ENCODE measurements at regions of chr16 and their contacts with region 1.

Region 1: DNA sequence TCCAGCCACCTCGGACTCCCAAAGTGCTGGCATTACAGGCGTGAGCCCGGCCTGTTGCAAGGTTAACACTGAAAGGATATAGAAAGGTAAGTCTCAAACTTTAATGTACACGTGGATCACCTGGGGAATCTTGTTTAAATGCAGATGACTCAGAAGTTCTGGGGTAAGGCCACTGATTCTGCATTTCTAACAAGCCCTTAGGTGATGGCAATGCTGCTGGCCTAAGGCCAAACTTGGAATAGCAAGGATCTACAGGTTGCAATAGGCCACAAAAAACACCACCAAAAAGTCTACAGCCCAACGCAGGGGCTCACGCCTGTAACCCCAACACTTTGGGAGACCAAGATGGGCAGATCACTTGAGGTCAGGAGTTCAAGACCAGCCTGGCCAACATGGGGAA is 4.2 kb downstream of the CMTM4 start:
- DNase-seq: no peak
- ATAC-seq: no peak
- H3K4me3 ChIP-seq: no peak overlapping the region
- H3K27ac ChIP-seq: no peak overlapping the region
- H3K4me1 ChIP-seq: peaks cover 75% of the 10 kb centered on the region
- H3K27me3 ChIP-seq: peaks cover 0 to 2% of the 10 kb centered on the region in 2 experiments; a peak in 3 of 5 replicates
- CTCF ChIP-seq: no peak
- EP300 ChIP-seq: no peak
- POLR2A ChIP-seq: no peak
- RAD21 ChIP-seq: no peak

Region 2: GRCh38 chr16:66650707-66651473 is 41.4 kb before region 1 on chr16:
- CTCF ChIA-PET with region 1: no interaction called
- POLR2A ChIA-PET with region 1: no interaction called
- in situ Hi-C with region 1: no loop called
- intact Hi-C with region 1: loop called (anchors 5 kb)
- DNase-seq: peak; percentile 79
- ATAC-seq: peak; percentile 98
- H3K4me3 ChIP-seq: no peak overlapping the region
- H3K27ac ChIP-seq: no peak overlapping the region
- H3K4me1 ChIP-seq: peaks cover 11% of the 10 kb centered on the region
- H3K27me3 ChIP-seq: no peaks in the 10 kb centered on the region
- CTCF ChIP-seq: peak; percentile 90
- EP300 ChIP-seq: no peak
- POLR2A ChIP-seq: no peak
- RAD21 ChIP-seq: peak; percentile 58

Region 3: GRCh38 chr16:66717776-66718175 is 25.4 kb after region 1 on chr16:
- CTCF ChIA-PET with region 1: no interaction called
- POLR2A ChIA-PET with region 1: no interaction called
- in situ Hi-C with region 1: no loop called
- intact Hi-C with region 1: no loop called
- DNase-seq: no peak
- ATAC-seq: peak; percentile 18; the same call in 2 of the 3 replicates
- H3K4me3 ChIP-seq: no peak overlapping the region
- H3K27ac ChIP-seq: no peak overlapping the region
- H3K4me1 ChIP-seq: peaks cover 16% of the 10 kb centered on the region
- H3K27me3 ChIP-seq: no peaks in the 10 kb centered on the region; a peak in 2 of 5 replicates
- CTCF ChIP-seq: no peak
- EP300 ChIP-seq: no peak
- POLR2A ChIP-seq: no peak
- RAD21 ChIP-seq: no peak

Measured in HepG2 (cell line).